Colonic mucosa (tissue), 4 donors: ENCODE measurements at regions of chr14 and their contacts with region 1.

Region 1: DNA sequence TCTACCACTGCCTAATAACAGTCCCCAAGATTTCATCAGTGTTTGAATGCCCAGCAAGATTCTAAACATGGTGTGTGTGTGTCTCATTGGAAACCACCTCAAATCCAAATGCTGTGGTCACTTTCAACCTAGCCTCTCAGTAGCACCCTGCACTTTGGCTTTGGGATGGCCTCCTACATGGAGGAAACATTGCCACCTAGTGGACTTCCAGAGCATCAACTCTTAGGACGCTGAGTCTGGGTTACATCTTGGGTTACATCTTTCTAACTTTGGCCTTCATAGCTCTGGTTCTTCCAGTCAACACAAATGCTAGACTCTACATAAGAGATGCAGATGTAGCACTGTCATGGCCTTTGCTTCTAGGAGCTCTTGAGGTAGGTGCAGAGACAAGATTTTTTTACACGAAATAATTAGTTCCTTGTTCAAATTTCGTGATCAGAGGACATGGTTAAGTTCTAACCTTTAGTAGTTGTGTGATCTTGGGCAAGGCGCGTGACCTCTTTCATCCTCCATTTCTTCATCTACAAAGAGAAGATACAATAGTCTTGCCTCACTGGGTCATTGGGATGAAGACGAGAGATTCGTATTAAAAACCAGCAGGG is 113.5 kb upstream of the VASH1 start:
- DNase-seq: no peak
- H3K4me3 ChIP-seq: no peak overlapping the region
- H3K27ac ChIP-seq: no peak overlapping the region
- H3K4me1 ChIP-seq: no peaks in the 10 kb centered on the region
- H3K27me3 ChIP-seq: no peaks in the 10 kb centered on the region
- CTCF ChIP-seq: peak; percentile 69

Region 2: DNA sequence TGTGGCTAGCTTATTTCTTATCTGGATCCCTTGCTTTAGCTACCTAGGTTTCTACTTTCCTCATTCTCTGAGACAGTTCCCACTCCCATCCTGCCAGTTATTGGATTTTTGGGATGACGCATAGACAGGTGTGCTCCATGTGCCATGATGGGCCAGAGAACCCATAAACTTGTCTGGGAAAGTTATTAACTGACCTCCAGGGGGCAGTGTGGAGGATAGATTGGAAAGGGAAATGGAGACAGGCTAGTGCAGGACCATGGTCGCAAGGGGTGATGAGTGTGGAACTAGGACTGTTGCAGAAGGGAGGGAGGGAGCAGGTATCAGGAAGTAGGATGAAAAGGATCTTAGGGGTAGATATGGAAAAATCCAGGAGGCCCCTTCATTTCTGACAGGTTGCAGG is 191.6 kb before region 1 on chr14:
- intact Hi-C with region 1: loop called (anchors 5 kb)
- DNase-seq: peak; percentile 41
- H3K4me3 ChIP-seq: no peak overlapping the region
- H3K27ac ChIP-seq: no peak overlapping the region
- H3K4me1 ChIP-seq: no peaks in the 10 kb centered on the region
- H3K27me3 ChIP-seq: no peaks in the 10 kb centered on the region
- CTCF ChIP-seq: peak; percentile 30